ENCODE measurements at regions of chr1 and their contacts with region 1.

Region 1: DNA sequence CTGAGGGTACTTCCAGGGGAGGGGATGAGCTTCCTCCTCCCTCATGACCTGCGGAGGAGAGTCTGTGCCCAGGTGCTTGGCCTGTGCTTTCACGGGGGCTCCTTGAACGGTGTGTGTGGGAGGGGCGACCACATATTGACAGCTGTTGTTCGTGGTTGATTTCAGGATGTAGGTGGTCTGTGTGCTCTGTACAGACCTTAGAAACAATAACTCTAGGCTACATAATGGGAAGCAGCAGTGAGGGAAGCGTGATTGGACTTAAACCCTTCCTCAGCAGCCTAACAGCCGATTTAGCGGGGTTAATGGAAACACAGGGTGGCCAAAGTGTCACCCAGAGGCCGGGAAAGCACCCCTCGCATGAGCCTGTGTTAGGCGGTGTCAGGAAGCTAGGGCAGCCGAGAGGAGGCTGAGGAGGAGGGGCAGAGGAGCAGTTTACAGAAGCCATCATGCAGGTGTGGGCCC is 56.0 kb downstream of the TBCE start:
- DNase-seq: no peak
- H3K4me3 ChIP-seq: no peak overlapping the region
- H3K27ac ChIP-seq: no peak overlapping the region
- H3K4me1 ChIP-seq: peaks cover 1% of the 10 kb centered on the region
- H3K27me3 ChIP-seq: no peaks in the 10 kb centered on the region
- CTCF ChIP-seq: no peak
- EP300 ChIP-seq: no peak
- POLR2A ChIP-seq: no peak

Region 2: DNA sequence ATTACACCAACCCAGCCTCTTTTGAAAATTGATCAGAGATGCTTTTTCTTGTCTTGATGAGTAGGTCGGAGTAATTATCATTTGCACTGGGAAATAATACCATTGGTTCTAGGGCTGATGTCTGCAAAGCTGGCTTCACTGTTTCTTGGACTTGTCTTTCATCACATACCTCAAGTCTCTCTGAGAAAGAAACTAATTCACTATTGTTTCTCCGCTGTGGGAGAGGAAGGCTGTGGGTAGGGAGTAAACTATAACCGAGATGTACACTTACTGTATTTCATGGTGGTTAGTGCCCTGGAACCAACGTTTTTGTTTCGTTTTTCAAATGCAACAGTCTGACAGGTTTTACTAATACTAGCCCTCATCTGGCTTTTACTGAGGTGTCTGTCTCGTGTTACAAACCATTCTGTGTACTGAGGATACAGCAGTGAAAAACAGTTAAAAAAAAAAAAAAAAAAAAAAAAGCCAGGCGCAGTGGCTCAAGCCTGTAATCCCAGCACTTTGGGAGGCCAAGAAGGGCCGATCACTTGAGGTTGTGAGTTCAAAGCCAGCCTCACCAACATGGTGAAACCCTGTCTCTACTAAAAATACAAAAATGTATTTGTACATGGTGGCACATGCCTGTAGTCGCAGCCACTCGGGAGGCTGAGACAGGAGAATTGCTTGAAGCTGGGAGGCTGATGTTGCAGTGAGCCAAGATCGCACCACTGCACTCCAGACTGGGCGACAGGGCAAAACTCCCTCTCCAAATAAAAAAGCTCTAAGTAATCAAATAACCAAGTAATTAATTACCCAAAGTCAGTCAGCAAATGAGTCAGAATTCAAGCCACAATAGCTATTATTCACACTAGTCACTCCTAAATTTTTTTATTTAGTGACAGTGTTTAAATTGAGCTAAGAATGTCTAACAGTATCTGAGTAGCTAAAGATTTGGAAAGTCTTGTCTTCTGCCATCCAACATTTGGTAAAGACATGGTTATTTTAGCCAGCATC is 317.9 kb before region 1 on chr1:
- intact Hi-C with region 1: loop called in 2 of 4 experiments (anchors 5 to 10 kb)
- DNase-seq: no peak
- H3K4me3 ChIP-seq: no peak overlapping the region
- H3K27ac ChIP-seq: no peak overlapping the region
- H3K4me1 ChIP-seq: peaks cover 3% of the 10 kb centered on the region
- H3K27me3 ChIP-seq: no peaks in the 10 kb centered on the region
- CTCF ChIP-seq: no peak
- EP300 ChIP-seq: no peak
- POLR2A ChIP-seq: no peak

Region 3: GRCh38 chr1:235259133-235259778 is 164.0 kb before region 1 on chr1:
- intact Hi-C with region 1: loop called in 2 of 4 experiments (anchors 5 kb)
- DNase-seq: no peak
- H3K4me3 ChIP-seq: no peak overlapping the region
- H3K27ac ChIP-seq: no peak overlapping the region
- H3K4me1 ChIP-seq: no peaks in the 10 kb centered on the region
- H3K27me3 ChIP-seq: no peaks in the 10 kb centered on the region
- CTCF ChIP-seq: no peak
- EP300 ChIP-seq: no peak
- POLR2A ChIP-seq: no peak

Region 4: GRCh38 chr1:235468970-235469369 is 45.7 kb after region 1 on chr1:
- intact Hi-C with region 1: no loop called
- DNase-seq: no peak
- H3K4me3 ChIP-seq: no peak overlapping the region
- H3K27ac ChIP-seq: no peak overlapping the region
- H3K4me1 ChIP-seq: no peaks in the 10 kb centered on the region
- H3K27me3 ChIP-seq: no peaks in the 10 kb centered on the region
- CTCF ChIP-seq: no peak
- EP300 ChIP-seq: no peak
- POLR2A ChIP-seq: no peak

Region 5: DNA sequence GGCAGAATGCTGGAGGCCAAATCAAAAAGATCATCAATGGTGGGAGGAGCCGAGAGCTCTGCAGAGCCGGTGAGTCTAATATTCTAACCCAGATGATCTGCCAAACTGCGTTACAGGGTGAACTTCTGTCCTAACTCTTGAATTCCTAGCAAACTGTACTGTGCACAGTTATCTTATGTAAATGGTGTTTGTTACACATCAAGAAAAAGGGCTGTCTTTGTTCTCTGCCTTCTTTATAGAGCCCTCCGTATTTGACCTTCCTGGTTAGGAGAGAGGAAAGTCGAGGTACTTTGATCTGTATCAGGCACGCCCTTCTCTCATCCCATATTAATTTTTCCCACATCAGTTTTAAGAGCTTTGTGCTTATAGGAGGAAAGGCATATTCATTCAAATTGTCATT is 1543.4 kb after region 1 on chr1:
- intact Hi-C with region 1: no loop called
- DNase-seq: no peak
- H3K4me3 ChIP-seq: no peak overlapping the region
- H3K27ac ChIP-seq: no peak overlapping the region
- H3K4me1 ChIP-seq: no peaks in the 10 kb centered on the region
- H3K27me3 ChIP-seq: no peaks in the 10 kb centered on the region
- CTCF ChIP-seq: no peak
- EP300 ChIP-seq: no peak
- POLR2A ChIP-seq: no peak